ENCODE measurements at regions of chrX and their contacts with region 1.

Region 1: GRCh38 chrX:106894392-106894909 is 8.7 kb downstream of the RIPPLY1 start:
- DNase-seq: peak; percentile 12 to 67 (median 26)
- ATAC-seq: peak; percentile 62
- H3K4me3 ChIP-seq: no peak overlapping the region
- H3K4me3 Mint-ChIP-seq: no peak overlapping the region
- H3K27ac ChIP-seq: no peak overlapping the region
- H3K27ac Mint-ChIP-seq: no peak overlapping the region
- H3K4me1 ChIP-seq: no peaks in the 10 kb centered on the region
- H3K4me1 Mint-ChIP-seq: no peaks in the 10 kb centered on the region
- H3K27me3 ChIP-seq: peaks cover 0 to 3% of the 10 kb centered on the region in 2 experiments
- H3K27me3 Mint-ChIP-seq: peaks cover 21% of the 10 kb centered on the region
- CTCF ChIP-seq: peak; percentile 54

Region 2: GRCh38 chrX:106952988-106953387 is 58.5 kb after region 1 on chrX:
- CTCF ChIA-PET with region 1: interaction called, 4 read pairs
- POLR2A ChIA-PET with region 1: no interaction called
- intact Hi-C with region 1: loop called (anchors 1 to 2 kb)
- DNase-seq: peak in 3 of 14 experiments; percentile 2 to 7 (median 3)
- ATAC-seq: no peak
- H3K4me3 ChIP-seq: no peak overlapping the region
- H3K4me3 Mint-ChIP-seq: no peak overlapping the region
- H3K27ac ChIP-seq: no peak overlapping the region
- H3K27ac Mint-ChIP-seq: no peak overlapping the region
- H3K4me1 ChIP-seq: no peaks in the 10 kb centered on the region
- H3K4me1 Mint-ChIP-seq: no peaks in the 10 kb centered on the region
- H3K27me3 ChIP-seq: no peaks in the 10 kb centered on the region
- H3K27me3 Mint-ChIP-seq: no peaks in the 10 kb centered on the region
- CTCF ChIP-seq: peak; percentile 31

Region 3: GRCh38 chrX:107439477-107439876 is 545.0 kb after region 1 on chrX:
- CTCF ChIA-PET with region 1: no interaction called
- POLR2A ChIA-PET with region 1: no interaction called
- intact Hi-C with region 1: loop called in 1 of 2 experiments (anchors 10 kb)
- DNase-seq: no peak
- ATAC-seq: no peak
- H3K4me3 ChIP-seq: no peak overlapping the region
- H3K4me3 Mint-ChIP-seq: no peak overlapping the region
- H3K27ac ChIP-seq: no peak overlapping the region
- H3K27ac Mint-ChIP-seq: no peak overlapping the region
- H3K4me1 ChIP-seq: no peaks in the 10 kb centered on the region
- H3K4me1 Mint-ChIP-seq: no peaks in the 10 kb centered on the region
- H3K27me3 ChIP-seq: peaks cover 0 to 2% of the 10 kb centered on the region in 2 experiments
- H3K27me3 Mint-ChIP-seq: peaks cover 3% of the 10 kb centered on the region
- CTCF ChIP-seq: no peak

Region 4: GRCh38 chrX:108064613-108065012 is 1170.2 kb after region 1 on chrX:
- CTCF ChIA-PET with region 1: no interaction called
- POLR2A ChIA-PET with region 1: no interaction called
- intact Hi-C with region 1: loop called in 1 of 2 experiments (anchors 10 kb)
- DNase-seq: no peak
- ATAC-seq: no peak
- H3K4me3 ChIP-seq: no peak overlapping the region
- H3K4me3 Mint-ChIP-seq: no peak overlapping the region
- H3K27ac ChIP-seq: no peak overlapping the region
- H3K27ac Mint-ChIP-seq: no peak overlapping the region
- H3K4me1 ChIP-seq: no peaks in the 10 kb centered on the region
- H3K4me1 Mint-ChIP-seq: peaks cover 2% of the 10 kb centered on the region
- H3K27me3 ChIP-seq: no peaks in the 10 kb centered on the region
- H3K27me3 Mint-ChIP-seq: no peaks in the 10 kb centered on the region
- CTCF ChIP-seq: no peak